H1 (cell line): ENCODE measurements at regions of chr10 and their contacts with region 1.

Region 1: GRCh38 chr10:11367505-11367904 is 243.9 kb downstream of the USP6NL start:
- DNase-seq: no peak
- H3K4me3 ChIP-seq: no peak overlapping the region
- H3K27ac ChIP-seq: no peak overlapping the region
- H3K4me1 ChIP-seq: no peaks in the 10 kb centered on the region
- H3K27me3 ChIP-seq: no peaks in the 10 kb centered on the region
- CTCF ChIP-seq: peak; percentile 10 to 42 (median 33); a peak in 3 of 4 replicates
- EP300 ChIP-seq: no peak
- POLR2A ChIP-seq: no peak
- RAD21 ChIP-seq: no peak; a peak in 1 of 4 replicates

Region 2: GRCh38 chr10:10831085-10831484 is 536.4 kb before region 1 on chr10:
- CTCF ChIA-PET with region 1: no interaction called
- POLR2A ChIA-PET with region 1: no interaction called
- DNase-seq: no peak
- H3K4me3 ChIP-seq: no peak overlapping the region
- H3K27ac ChIP-seq: no peak overlapping the region
- H3K4me1 ChIP-seq: no peaks in the 10 kb centered on the region
- H3K27me3 ChIP-seq: no peaks in the 10 kb centered on the region
- CTCF ChIP-seq: no peak
- EP300 ChIP-seq: no peak
- POLR2A ChIP-seq: no peak
- RAD21 ChIP-seq: no peak

Region 3: GRCh38 chr10:10855151-10855581 is 512.3 kb before region 1 on chr10:
- CTCF ChIA-PET with region 1: no interaction called
- POLR2A ChIA-PET with region 1: no interaction called
- DNase-seq: no peak
- H3K4me3 ChIP-seq: no peak overlapping the region
- H3K27ac ChIP-seq: no peak overlapping the region
- H3K4me1 ChIP-seq: no peaks in the 10 kb centered on the region
- H3K27me3 ChIP-seq: 0 out of 7 replicates have a peak, but pooled peaks cover 0 to 2% (median 0%) of the 10 kb centered on the region in 4 experiments
- CTCF ChIP-seq: no peak
- EP300 ChIP-seq: no peak
- POLR2A ChIP-seq: no peak
- RAD21 ChIP-seq: no peak

Region 4: DNA sequence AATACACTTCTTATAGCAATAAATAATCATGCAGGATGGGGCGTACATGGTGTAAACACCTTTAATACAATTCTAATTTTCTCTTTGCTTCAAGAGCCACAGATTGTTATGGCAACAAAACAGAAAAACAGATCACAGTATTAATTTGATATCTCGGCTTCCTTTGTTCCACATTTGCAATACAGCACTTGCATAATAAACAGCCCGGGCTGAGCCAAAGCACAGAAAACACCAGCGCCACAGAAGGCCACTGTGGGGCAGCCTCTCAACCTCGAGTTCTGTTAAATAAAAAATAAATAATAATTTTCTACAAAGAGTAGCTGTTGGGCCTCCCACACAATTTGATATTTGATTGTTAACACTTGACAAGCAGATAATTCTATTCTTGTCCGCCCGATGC is 11.9 kb before region 1 on chr10:
- CTCF ChIA-PET with region 1: interaction called, 12 read pairs
- POLR2A ChIA-PET with region 1: no interaction called
- DNase-seq: no peak
- H3K4me3 ChIP-seq: no peak overlapping the region
- H3K27ac ChIP-seq: no peak overlapping the region
- H3K4me1 ChIP-seq: no peaks in the 10 kb centered on the region
- H3K27me3 ChIP-seq: no peaks in the 10 kb centered on the region
- CTCF ChIP-seq: no peak
- EP300 ChIP-seq: no peak
- POLR2A ChIP-seq: no peak
- RAD21 ChIP-seq: no peak; a peak in 1 of 4 replicates

Region 5: GRCh38 chr10:11379771-11380170 is 12.3 kb after region 1 on chr10:
- CTCF ChIA-PET with region 1: interaction called, 11 read pairs
- POLR2A ChIA-PET with region 1: no interaction called
- DNase-seq: no peak
- H3K4me3 ChIP-seq: no peak overlapping the region
- H3K27ac ChIP-seq: no peak overlapping the region
- H3K4me1 ChIP-seq: no peaks in the 10 kb centered on the region
- H3K27me3 ChIP-seq: no peaks in the 10 kb centered on the region
- CTCF ChIP-seq: no peak
- EP300 ChIP-seq: no peak
- POLR2A ChIP-seq: no peak
- RAD21 ChIP-seq: no peak

Region 6: DNA sequence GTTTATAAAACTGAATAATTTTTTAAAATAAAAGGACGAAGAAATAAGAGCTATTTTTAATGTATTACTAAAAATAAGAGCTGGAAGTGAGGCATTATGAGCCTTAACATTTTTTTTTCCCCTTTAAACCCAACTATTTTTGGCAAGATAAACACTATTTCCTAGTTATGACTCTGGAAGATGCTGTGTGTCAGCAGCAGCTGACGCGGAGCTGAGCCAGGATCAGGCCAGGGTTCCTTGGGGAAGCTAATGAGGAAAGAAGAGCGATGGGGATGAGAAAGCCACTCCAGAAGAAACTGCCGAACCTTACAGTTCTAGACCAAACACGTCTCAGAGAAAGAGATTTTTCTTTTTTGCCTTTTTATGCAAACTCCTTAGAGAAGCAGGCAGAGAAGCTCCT is 158.0 kb after region 1 on chr10:
- CTCF ChIA-PET with region 1: no interaction called
- POLR2A ChIA-PET with region 1: no interaction called
- DNase-seq: no peak
- H3K4me3 ChIP-seq: no peak overlapping the region
- H3K27ac ChIP-seq: no peak overlapping the region
- H3K4me1 ChIP-seq: peaks cover 0 to 3% (median under 1%) of the 10 kb centered on the region in 4 experiments; a peak in 1 of 7 replicates
- H3K27me3 ChIP-seq: no peaks in the 10 kb centered on the region
- CTCF ChIP-seq: no peak
- EP300 ChIP-seq: no peak
- POLR2A ChIP-seq: no peak
- RAD21 ChIP-seq: no peak